ENCODE measurements at regions of chr14 and their contacts with region 1.

Region 1: GRCh38 chr14:60640859-60641741 is 8.2 kb downstream of the SIX1 start:
- DNase-seq: no peak
- H3K4me3 Mint-ChIP-seq: no peak overlapping the region
- H3K27ac Mint-ChIP-seq: no peak overlapping the region
- H3K4me1 Mint-ChIP-seq: peaks cover 5% of the 10 kb centered on the region
- H3K27me3 Mint-ChIP-seq: peaks cover 89% of the 10 kb centered on the region

Region 2: DNA sequence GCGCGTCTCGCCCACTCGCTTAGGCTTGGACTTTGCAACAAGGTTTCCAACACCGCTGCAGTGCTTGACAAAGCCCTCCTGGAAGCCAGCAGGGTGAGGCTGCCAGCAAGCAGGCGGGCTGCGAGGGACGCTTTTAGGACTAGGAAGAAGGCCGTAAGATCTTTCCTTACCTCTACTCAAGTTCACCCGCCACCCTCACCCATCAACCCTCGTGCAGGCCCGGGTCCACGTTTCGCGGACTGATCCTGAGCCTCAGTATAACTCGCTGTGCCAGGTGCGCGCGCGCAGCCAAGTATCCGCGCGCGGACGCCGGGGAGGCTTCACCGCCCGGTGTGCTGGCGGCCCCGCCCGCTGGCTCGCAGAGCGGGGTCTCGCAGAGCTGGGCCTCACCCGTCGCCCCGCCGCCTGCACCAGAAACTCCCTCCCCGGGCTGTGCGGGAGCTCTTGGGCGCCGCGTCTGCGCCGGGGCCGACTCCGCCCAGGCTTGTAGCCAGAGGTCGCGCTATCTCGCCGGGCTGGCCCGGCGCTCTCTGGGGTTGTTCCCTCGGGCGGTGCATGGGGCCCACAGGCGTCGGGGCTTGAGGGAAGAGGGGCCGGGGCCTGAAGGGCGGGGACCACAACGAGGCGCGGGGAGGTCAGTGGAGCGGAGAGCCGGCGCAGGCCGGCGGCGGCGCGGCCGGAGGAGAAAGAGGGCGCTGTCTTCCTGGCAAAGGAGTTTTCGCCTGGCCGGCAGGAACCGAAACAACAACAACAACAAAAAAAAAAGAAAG is 15.8 kb after region 1 on chr14:
- intact Hi-C with region 1: loop called (anchors 2 kb)
- DNase-seq: peak; percentile 81
- H3K4me3 Mint-ChIP-seq: peak overlapping the region; percentile 88
- H3K27ac Mint-ChIP-seq: peak overlapping the region; percentile 41
- H3K4me1 Mint-ChIP-seq: peaks cover 34% of the 10 kb centered on the region
- H3K27me3 Mint-ChIP-seq: peaks cover 84% of the 10 kb centered on the region

Region 3: DNA sequence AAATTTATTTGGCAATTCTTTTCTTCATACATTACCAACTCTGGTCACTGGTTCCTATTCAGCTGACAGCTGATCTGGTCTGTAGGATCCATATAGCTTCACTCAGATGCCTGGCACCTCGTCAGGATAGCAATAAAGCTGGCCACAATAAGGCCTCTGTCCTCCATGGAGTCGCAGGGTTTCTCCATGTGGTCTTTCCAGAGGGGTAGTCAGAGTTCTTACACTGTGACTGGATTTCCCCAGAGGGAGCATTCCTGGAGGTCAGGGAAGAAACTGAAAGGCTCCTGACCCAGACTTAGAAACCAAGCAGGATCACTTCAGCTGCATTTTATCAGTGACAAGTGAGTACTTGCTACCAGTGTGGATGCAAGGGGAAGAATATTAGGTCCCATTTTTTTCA is 43.1 kb after region 1 on chr14:
- intact Hi-C with region 1: no loop called
- DNase-seq: no peak
- H3K4me3 Mint-ChIP-seq: no peak overlapping the region
- H3K27ac Mint-ChIP-seq: no peak overlapping the region
- H3K4me1 Mint-ChIP-seq: no peaks in the 10 kb centered on the region
- H3K27me3 Mint-ChIP-seq: peaks cover 7% of the 10 kb centered on the region